ENCODE measurements at regions of chr11 and their contacts with region 1.

Region 1: DNA sequence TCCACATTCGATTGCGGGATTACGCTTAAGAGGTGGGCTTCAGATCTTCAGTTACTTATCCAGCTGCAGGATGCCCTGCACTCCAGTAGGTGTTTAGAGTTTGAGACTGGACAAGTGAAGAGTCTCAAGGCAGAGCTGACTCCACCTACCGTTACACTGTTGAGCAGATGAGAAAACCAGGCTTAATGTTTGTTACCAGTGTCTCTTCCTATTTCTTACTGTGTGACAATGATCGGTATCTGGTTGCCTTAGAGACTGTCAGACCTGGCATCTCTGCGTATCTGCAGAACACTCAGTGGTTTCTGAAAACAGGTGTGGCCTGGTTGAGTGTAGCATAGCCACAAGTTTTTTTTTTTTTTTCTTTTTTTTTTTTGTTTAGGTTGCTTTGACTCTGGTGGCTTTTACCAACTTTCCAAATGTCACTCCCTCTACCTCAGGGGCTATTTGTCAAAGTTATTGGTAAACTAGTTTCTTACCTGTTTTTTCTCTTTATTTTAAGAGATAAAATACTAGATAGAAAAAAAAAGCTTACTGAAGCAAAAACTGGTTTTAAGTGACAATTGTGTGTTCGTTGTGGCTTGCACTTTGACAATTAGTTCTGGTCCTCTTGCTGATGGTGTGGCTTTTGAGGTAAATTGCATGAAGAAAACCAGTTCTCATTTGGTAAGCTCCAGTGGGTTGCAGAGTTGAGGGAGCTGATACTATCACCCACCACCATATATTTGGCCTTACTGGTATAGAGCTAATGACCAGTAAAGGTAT is 284.8 kb downstream of the ETS1 start:
- DNase-seq: peak; percentile 84
- H3K4me3 Mint-ChIP-seq: peak overlapping the region; percentile 84
- H3K27ac Mint-ChIP-seq: peak overlapping the region; percentile 87
- H3K4me1 Mint-ChIP-seq: peaks cover 72% of the 10 kb centered on the region
- H3K27me3 Mint-ChIP-seq: no peaks in the 10 kb centered on the region

Region 2: DNA sequence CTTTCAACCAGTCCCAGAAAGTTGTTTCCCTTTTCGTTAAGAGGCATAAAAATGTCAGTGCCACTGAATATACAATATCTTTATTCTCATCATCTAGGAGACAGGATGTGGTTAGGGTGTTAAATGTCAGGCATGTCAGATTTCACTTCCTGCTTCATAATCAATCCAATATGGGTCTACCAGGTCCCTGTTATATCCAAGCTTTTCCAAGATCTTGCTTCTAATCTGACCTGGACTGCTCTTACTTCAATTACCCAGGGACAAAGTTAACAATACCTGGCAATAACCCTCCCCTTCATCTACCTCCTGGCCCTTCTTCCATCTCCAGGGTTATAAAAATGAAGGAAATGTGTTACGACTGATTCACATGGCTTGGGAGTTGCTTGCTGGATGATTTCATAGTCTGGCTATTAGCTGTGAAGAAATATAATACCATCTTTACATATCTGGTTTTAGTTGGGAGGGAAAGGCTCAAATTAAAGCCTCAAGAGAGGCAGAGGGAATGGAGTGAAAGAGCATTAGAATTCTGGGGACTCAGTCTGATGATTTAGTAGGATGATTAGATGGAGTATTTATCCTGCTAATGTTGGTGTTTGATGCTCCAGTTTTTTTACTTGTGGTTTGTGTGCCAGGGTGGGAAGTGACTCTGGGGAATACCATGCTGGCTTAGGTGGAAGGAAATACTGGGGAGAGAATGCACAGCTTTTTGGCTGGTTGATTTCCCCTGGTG is 249.5 kb before region 1 on chr11:
- CTCF ChIA-PET with region 1: no interaction called
- POLR2A ChIA-PET with region 1: no interaction called
- DNase-seq: no peak
- H3K4me3 Mint-ChIP-seq: peak overlapping the region; percentile 53
- H3K27ac Mint-ChIP-seq: peak overlapping the region; percentile 83
- H3K4me1 Mint-ChIP-seq: peaks cover 52% of the 10 kb centered on the region
- H3K27me3 Mint-ChIP-seq: no peaks in the 10 kb centered on the region

Region 3: GRCh38 chr11:128246364-128246801 is 56.2 kb before region 1 on chr11:
- CTCF ChIA-PET with region 1: no interaction called
- POLR2A ChIA-PET with region 1: no interaction called
- DNase-seq: no peak
- H3K4me3 Mint-ChIP-seq: no peak overlapping the region
- H3K27ac Mint-ChIP-seq: no peak overlapping the region
- H3K4me1 Mint-ChIP-seq: no peaks in the 10 kb centered on the region
- H3K27me3 Mint-ChIP-seq: peaks cover 6% of the 10 kb centered on the region

Region 4: DNA sequence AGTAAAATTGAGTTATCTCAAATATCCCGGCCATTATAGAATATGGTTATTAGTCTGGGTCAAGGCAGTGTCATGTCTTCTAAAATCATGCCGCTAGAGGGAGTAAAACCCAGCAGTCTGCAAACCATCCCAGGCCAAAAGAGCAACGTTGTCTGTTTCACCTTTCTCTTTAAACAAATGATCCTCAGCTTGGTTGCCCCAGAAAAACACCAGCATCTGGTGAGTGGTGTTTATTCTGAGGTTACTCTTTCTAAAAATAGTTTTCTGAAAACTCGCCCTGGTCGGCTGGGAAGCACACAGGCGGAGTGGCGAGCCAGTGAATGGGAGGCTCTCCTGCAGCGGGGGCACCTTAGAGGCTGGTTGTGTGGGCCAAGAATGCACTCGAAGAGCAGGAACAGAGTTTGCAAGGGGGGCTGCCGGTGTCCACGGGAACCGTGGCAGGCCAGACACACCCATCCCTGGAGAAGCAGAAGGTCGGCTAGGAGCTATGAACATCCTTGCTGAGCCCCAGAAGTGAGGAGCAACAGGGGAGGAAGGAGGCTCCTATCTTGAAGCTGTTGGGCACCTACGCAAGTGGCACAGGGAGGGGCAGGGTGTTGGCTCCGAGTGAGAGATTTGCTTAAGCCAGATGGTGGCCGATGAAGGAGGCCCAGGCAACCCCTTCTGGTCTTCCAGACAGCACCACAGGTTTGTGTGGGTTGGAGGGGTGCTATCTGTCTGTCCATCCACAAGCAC is 12.3 kb before region 1 on chr11:
- CTCF ChIA-PET with region 1: interaction called, 90 read pairs
- POLR2A ChIA-PET with region 1: interaction called, 199 read pairs
- DNase-seq: peak; percentile 79
- H3K4me3 Mint-ChIP-seq: peak overlapping the region; percentile 92
- H3K27ac Mint-ChIP-seq: peak overlapping the region; percentile 97
- H3K4me1 Mint-ChIP-seq: peaks cover 87% of the 10 kb centered on the region
- H3K27me3 Mint-ChIP-seq: no peaks in the 10 kb centered on the region

Region 5: GRCh38 chr11:128458321-128458720 is 155.7 kb after region 1 on chr11:
- CTCF ChIA-PET with region 1: interaction called, 8 read pairs
- POLR2A ChIA-PET with region 1: interaction called, 34 read pairs
- DNase-seq: no peak
- H3K4me3 Mint-ChIP-seq: no peak overlapping the region
- H3K27ac Mint-ChIP-seq: peak overlapping the region; percentile 7
- H3K4me1 Mint-ChIP-seq: peaks cover 67% of the 10 kb centered on the region
- H3K27me3 Mint-ChIP-seq: no peaks in the 10 kb centered on the region

Region 6: DNA sequence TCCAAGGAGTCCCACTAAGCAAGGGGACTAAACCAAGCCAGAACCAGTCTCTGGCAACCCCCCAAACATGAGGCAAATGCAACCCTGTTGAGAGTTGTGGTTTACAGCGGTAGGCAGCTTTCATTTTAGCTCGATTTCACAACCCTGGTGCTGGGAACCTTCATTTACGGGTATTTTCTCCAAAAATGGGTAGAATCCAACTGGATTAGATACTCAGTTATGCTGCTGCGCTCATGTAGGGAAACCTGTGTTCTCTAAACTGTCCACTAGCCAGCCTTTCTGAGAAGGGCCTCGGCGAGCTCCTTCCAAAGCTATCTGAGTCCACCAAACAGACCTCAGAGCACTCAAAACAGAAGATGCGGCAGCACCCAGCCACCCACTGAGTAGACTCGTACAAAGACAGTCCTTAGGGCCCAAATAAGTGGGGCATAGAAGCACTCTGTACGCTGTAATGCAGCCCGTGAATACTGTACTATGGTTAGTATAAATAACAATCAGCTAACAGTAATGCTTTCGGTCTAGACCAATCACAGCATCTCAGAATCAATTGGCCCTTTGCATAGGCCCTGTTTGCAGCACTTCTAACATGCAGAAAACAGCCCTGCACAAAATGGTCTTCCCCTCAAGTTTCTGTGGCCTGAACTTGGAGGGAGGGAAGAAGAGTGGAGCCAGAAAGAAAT is 180.0 kb after region 1 on chr11:
- CTCF ChIA-PET with region 1: interaction called, 6 read pairs
- POLR2A ChIA-PET with region 1: interaction called, 30 read pairs
- DNase-seq: peak; percentile 59
- H3K4me3 Mint-ChIP-seq: peak overlapping the region; percentile 67
- H3K27ac Mint-ChIP-seq: peak overlapping the region; percentile 92
- H3K4me1 Mint-ChIP-seq: peaks cover 95% of the 10 kb centered on the region
- H3K27me3 Mint-ChIP-seq: no peaks in the 10 kb centered on the region

Region 7: GRCh38 chr11:128506999-128507611 is 204.5 kb after region 1 on chr11:
- CTCF ChIA-PET with region 1: interaction called, 7 read pairs
- POLR2A ChIA-PET with region 1: interaction called, 271 read pairs
- DNase-seq: no peak
- H3K4me3 Mint-ChIP-seq: peak overlapping the region; percentile 69
- H3K27ac Mint-ChIP-seq: peak overlapping the region; percentile 71
- H3K4me1 Mint-ChIP-seq: peaks cover 99% of the 10 kb centered on the region
- H3K27me3 Mint-ChIP-seq: no peaks in the 10 kb centered on the region

Region 8: GRCh38 chr11:128630367-128631230 is 328.0 kb after region 1 on chr11:
- CTCF ChIA-PET with region 1: interaction called, 11 read pairs
- POLR2A ChIA-PET with region 1: interaction called, 23 read pairs
- DNase-seq: peak; percentile 91
- H3K4me3 Mint-ChIP-seq: peak overlapping the region; percentile 38
- H3K27ac Mint-ChIP-seq: peak overlapping the region; percentile 85
- H3K4me1 Mint-ChIP-seq: peaks cover 63% of the 10 kb centered on the region
- H3K27me3 Mint-ChIP-seq: no peaks in the 10 kb centered on the region